Gastrocnemius medialis (tissue), 4 donors: ENCODE measurements at regions of chr2 and their contacts with region 1.

Region 1: GRCh38 chr2:9951272-9951972 is at the start of gene GRHL1:
- DNase-seq: peak; percentile 84 to 87
- ATAC-seq: peak; percentile 93 to 96
- H3K4me3 ChIP-seq: peak within 1 kb of the TSS; percentile 58 to 84 (median 73)
- H3K27ac ChIP-seq: peak within 1 kb of the TSS; percentile 71 to 90 (median 77)
- H3K4me1 ChIP-seq: peaks cover 0 to 5% of the 10 kb centered on the region in 2 donors
- H3K27me3 ChIP-seq: peaks cover 0 to 2% (median 0%) of the 10 kb centered on the region in 3 donors
- CTCF ChIP-seq: peak in 1 of 5 experiments; percentile 24
- POLR2A ChIP-seq: peak; percentile 39 to 60
- total RNA-seq, gene GRHL1: 0.29 to 1.0 (median 0.75) TPM

Region 2: DNA sequence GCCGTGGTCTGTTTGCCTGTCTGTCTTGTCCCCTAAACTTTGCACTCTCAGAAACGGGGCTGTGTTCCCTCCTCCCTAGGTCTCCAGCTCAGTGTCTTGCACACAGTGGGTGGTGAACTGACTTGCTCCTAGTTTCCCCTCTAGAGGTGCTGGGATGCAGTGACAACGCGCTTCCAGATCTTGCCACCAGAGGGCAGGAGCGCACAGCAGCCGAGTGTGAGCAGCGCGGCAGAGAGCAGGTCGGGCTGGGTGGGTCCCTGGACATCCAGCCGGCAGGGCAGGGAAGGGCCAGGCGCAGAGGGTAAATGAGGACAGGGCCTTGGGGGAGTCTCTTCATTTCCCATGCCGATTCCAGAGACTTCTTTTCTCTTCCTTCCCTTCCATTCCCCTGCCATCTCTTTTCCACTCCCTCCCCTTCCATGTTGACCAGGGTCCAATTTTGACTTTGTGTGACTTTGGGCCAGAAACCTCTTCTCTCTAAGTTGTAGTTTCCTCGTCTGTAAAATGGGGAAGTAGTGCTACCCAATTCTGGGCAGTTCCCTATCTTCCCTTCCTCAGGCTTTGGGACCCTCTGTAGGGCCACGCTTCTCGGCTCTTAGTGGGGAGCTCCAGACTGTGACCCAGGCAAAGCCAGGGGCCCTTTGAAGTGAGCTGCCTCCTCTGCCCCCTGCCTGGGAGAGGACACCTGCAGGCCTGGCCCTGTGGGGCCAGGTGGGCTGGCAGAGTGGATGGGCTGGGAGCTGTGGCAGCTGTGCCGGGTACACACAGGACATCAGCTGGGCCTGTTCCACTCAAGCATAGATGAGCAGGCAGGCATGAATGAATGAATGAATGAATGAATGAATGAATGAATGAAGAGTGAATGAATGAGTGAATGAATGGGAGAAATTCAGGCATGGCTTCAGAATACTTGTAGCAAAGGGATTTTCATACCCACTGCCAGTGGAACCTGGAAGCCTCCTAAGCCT is 151.5 kb before region 1 on chr2:
- in situ Hi-C with region 1: no loop called
- intact Hi-C with region 1: loop called (anchors 5 kb)
- DNase-seq: peak; percentile 62 to 77
- ATAC-seq: peak; percentile 75 to 84
- H3K4me3 ChIP-seq: no peak overlapping the region
- H3K27ac ChIP-seq: peak overlapping the region in 2 of 4 donors; percentile 63 to 72
- H3K4me1 ChIP-seq: peaks cover 20 to 29% of the 10 kb centered on the region in 2 donors
- H3K27me3 ChIP-seq: no peaks in the 10 kb centered on the region
- CTCF ChIP-seq: peak; percentile 89 to 99 (median 92)
- POLR2A ChIP-seq: no peak

Region 3: DNA sequence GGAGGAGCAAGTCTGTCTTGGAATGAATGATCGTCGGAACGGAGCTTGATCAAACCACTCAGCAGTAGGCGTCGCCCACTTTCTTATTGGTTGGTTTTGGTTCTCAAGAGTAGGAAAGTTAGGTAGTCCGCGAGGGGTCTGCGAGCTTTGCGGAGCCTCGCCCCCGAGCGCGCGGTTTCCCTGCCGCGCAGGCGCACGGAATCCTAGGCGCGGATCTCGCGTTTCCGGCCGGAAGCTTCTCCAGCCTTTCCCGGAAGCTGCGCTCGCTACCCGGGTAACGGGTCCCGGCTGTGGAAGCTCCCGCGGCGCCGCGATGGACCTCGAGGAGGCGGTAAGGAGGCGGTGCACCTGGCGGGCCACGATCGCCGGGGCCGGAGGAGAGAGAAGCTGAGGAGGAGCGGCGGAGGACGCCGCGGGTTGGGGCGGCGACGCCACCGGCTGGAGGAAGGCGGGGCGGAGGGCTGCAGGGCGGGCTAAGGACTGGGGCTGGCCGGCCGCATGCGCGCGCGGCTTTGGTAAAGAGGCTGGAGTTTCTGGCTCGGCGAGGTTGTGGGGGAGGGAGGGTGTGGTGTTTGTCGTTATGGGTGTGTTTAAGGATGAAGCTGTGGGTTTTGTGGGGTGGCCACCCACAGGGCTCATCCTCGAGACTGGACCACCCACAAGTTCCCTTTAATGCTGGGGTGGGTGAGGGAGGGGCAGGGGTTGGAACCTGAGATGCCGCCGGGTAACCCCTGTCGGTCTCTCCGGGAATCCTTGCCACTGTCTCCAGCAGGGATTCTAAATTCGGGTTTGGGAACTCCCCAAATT is 108.0 kb before region 1 on chr2 and contains the start of gene TAF1B:
- in situ Hi-C with region 1: no loop called
- intact Hi-C with region 1: loop called (anchors 1 kb)
- DNase-seq: peak; percentile 61 to 81
- ATAC-seq: peak; percentile 93 to 94
- H3K4me3 ChIP-seq: peak within 1 kb of the TSS; percentile 74 to 97 (median 90)
- H3K27ac ChIP-seq: peak within 1 kb of the TSS; percentile 80 to 95 (median 88)
- H3K4me1 ChIP-seq: peaks cover 17 to 22% of the 10 kb centered on the region in 2 donors
- H3K27me3 ChIP-seq: no peaks in the 10 kb centered on the region
- CTCF ChIP-seq: peak in 1 of 5 experiments; percentile 25
- POLR2A ChIP-seq: peak; percentile 66 to 75
- total RNA-seq, gene TAF1B: 5.0 to 8.4 (median 7.3) TPM

Region 4: GRCh38 chr2:10448208-10448645 is 496.8 kb after region 1 on chr2 and contains the start of gene ODC1:
- in situ Hi-C with region 1: no loop called
- intact Hi-C with region 1: loop called (anchors 10 kb)
- DNase-seq: peak; percentile 88 to 94
- ATAC-seq: peak; percentile 69 to 77
- H3K4me3 ChIP-seq: peak within 1 kb of the TSS; percentile 67 to 90 (median 80)
- H3K27ac ChIP-seq: peak within 1 kb of the TSS; percentile 90 to 98 (median 95)
- H3K4me1 ChIP-seq: peaks cover 30 to 32% of the 10 kb centered on the region in 2 donors
- H3K27me3 ChIP-seq: no peaks in the 10 kb centered on the region
- CTCF ChIP-seq: no peak
- POLR2A ChIP-seq: peak; percentile 83 to 92
- total RNA-seq, gene ODC1: 134 to 339 (median 255) TPM